ENCODE measurements at regions of chrX and their contacts with region 1.

Region 1: GRCh38 chrX:123833387-123833786 is 26.5 kb upstream of the XIAP start:
- DNase-seq: peak; percentile 67
- ATAC-seq: peak; percentile 91
- H3K4me3 Mint-ChIP-seq: no peak overlapping the region
- H3K27ac Mint-ChIP-seq: no peak overlapping the region
- H3K4me1 Mint-ChIP-seq: peaks cover 7% of the 10 kb centered on the region
- H3K27me3 Mint-ChIP-seq: peaks cover 4% of the 10 kb centered on the region
- CTCF ChIP-seq: peak; percentile 68

Region 2: DNA sequence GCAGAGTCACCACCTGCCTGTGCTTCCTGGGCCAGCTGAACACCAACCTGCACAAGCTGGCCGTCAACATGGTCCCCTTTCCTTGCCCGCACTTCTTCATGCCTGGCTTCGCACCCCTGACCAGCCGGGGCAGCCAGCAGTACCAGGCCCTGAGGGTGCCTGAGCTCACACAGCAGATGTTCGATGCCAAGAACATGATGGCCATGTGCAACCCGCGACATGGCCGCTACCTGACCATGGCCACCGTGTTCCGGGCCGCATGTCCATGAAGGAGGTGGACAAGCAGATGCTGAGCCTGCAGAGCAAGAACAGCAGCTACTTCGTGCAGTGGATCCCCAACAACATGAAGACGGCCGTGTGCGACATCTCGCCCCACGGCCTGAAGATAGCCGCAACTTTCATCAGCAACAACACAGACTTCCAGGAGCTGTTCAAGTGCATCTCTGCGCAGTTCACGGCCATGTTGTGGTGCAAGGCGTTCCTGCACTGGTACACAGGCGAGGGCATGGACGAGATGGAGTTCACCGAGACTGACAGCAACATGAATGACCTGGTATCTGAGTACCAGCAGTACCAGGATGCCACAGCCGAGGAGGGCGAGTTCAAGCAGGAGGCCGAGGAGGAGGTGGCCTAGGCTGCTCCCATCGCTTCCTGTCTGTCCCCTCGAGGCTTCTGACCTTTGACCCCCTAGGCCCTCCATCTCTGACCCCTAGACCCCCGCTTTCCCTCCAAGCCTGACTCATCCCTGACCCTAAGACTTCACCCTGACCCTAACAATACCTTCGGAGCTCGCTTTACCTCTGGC is 270.8 kb before region 1 on chrX:
- CTCF ChIA-PET with region 1: no interaction called
- POLR2A ChIA-PET with region 1: no interaction called
- intact Hi-C with region 1: no loop called
- DNase-seq: no peak
- ATAC-seq: no peak
- H3K4me3 Mint-ChIP-seq: no peak overlapping the region
- H3K27ac Mint-ChIP-seq: no peak overlapping the region
- H3K4me1 Mint-ChIP-seq: no peaks in the 10 kb centered on the region
- H3K27me3 Mint-ChIP-seq: no peaks in the 10 kb centered on the region
- CTCF ChIP-seq: no peak

Region 3: DNA sequence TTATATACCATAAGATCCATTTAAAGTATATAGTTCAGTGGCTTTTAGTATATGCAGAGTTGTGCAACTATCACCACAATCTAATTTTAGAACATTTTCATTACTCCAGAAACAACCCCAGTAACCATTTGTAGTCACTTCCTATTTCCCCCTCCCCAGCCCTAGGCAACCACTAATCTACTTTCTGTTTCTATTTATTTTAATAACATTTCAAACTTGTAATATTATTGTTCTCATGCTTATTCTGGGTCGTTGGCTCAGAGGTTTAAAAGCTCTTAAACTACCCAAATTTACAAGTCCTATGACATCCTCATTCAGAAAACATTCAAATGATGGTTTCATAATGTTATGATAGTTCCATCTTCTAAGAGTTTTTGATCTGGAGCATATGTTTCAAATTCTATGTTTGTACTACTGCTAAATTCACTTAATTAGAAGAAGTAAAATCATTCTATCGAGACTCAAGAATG is 44.9 kb after region 1 on chrX:
- CTCF ChIA-PET with region 1: interaction called, 4 read pairs
- POLR2A ChIA-PET with region 1: no interaction called
- intact Hi-C with region 1: loop called (anchors 5 kb)
- DNase-seq: no peak
- ATAC-seq: peak; percentile 67
- H3K4me3 Mint-ChIP-seq: peak overlapping the region; percentile 46
- H3K27ac Mint-ChIP-seq: peak overlapping the region; percentile 77
- H3K4me1 Mint-ChIP-seq: peaks cover 35% of the 10 kb centered on the region
- H3K27me3 Mint-ChIP-seq: no peaks in the 10 kb centered on the region
- CTCF ChIP-seq: no peak

Region 4: GRCh38 chrX:123943488-123943887 is 110.1 kb after region 1 on chrX:
- CTCF ChIA-PET with region 1: interaction called, 3 read pairs
- POLR2A ChIA-PET with region 1: no interaction called
- intact Hi-C with region 1: loop called (anchors 10 kb)
- DNase-seq: no peak
- ATAC-seq: no peak
- H3K4me3 Mint-ChIP-seq: no peak overlapping the region
- H3K27ac Mint-ChIP-seq: no peak overlapping the region
- H3K4me1 Mint-ChIP-seq: no peaks in the 10 kb centered on the region
- H3K27me3 Mint-ChIP-seq: no peaks in the 10 kb centered on the region
- CTCF ChIP-seq: no peak

Region 5: GRCh38 chrX:123965712-123966111 is 132.3 kb after region 1 on chrX:
- CTCF ChIA-PET with region 1: no interaction called
- POLR2A ChIA-PET with region 1: no interaction called
- intact Hi-C with region 1: no loop called
- DNase-seq: no peak
- ATAC-seq: no peak
- H3K4me3 Mint-ChIP-seq: no peak overlapping the region
- H3K27ac Mint-ChIP-seq: peak overlapping the region; percentile 100
- H3K4me1 Mint-ChIP-seq: peaks cover 48% of the 10 kb centered on the region
- H3K27me3 Mint-ChIP-seq: no peaks in the 10 kb centered on the region
- CTCF ChIP-seq: no peak

Measured in activated CD8-positive, alpha-beta T cell treated with anti-CD3 and anti-CD28 coated beads for 36 hours (primary cell).